ENCODE measurements at regions of chr7 and their contacts with region 1.

Region 1: DNA sequence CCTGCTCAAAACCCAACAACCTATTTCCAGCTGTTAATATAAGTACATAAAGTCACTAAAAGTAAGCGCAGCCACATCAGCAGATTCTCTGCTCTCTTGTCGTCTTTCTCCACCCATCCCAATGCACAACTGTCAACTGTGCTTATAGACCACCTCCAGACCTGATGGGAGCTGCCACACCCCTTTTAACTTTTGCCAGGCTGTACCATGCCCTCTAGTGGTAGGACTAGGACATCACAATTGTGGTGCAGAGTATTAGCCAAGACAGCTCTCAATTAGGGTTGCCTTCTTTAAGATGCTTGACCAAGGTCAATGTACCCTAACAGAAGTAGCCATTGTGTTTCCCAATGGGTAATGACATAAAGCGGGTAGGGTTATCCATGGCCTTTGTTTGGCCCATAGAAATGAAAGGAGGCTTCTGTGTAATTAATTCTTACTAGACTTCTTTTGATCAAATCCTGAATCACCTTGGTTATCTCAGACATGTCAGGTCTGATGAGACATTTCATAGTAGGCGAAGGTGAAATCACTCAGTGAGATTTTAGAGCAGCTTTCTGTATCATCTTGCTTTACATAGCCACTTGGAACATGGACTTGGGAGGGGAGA is 68.1 kb downstream of the SCRN1 start:
- DNase-seq: peak; percentile 23
- H3K4me3 Mint-ChIP-seq: no peak overlapping the region
- H3K27ac Mint-ChIP-seq: no peak overlapping the region
- H3K4me1 Mint-ChIP-seq: no peaks in the 10 kb centered on the region
- H3K27me3 Mint-ChIP-seq: no peaks in the 10 kb centered on the region

Region 2: DNA sequence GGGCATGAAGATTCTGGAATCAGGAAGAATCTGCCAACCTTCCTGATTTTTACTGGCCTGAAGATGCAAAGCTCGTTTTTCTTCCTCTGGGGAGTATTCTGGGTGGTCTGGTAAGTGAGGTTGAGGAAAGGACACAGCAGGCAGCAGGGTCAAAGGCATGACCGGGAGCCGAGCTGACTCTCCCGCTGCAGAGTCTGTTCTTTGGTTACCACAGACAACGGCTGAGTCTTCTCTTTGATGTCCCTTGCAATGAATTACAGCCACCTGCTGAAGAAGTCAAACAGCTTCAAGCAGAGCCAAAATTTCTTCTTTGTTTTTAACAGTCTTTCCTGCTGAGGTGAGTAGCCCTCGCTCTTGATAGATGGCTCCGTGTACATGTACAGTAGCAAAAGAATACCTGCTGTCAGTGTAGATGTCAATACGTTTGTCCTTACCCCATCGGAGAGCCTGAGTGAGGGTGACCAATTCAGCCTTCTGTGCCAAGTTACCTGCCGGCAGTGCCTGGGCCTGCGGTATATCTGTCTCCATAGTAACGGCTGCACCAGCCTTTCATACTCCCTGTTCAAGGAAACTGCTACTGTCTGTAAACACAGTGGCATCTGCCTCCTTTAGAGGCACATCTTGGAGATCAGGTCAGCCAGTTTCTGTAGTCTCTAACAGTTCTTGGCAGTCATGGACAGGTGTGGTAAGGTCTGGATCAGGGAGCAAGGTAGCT is 281.5 kb before region 1 on chr7:
- intact Hi-C with region 1: loop called (anchors 2 kb)
- DNase-seq: no peak
- H3K4me3 Mint-ChIP-seq: no peak overlapping the region
- H3K27ac Mint-ChIP-seq: no peak overlapping the region
- H3K4me1 Mint-ChIP-seq: no peaks in the 10 kb centered on the region
- H3K27me3 Mint-ChIP-seq: no peaks in the 10 kb centered on the region

Region 3: GRCh38 chr7:29748286-29749108 is 173.0 kb before region 1 on chr7:
- intact Hi-C with region 1: loop called (anchors 1 kb)
- DNase-seq: no peak
- H3K4me3 Mint-ChIP-seq: no peak overlapping the region
- H3K27ac Mint-ChIP-seq: no peak overlapping the region
- H3K4me1 Mint-ChIP-seq: no peaks in the 10 kb centered on the region
- H3K27me3 Mint-ChIP-seq: peaks cover 7% of the 10 kb centered on the region

Region 4: GRCh38 chr7:29806208-29806994 is 115.1 kb before region 1 on chr7 and contains the start of gene WIPF3:
- intact Hi-C with region 1: no loop called
- DNase-seq: no peak
- H3K4me3 Mint-ChIP-seq: no peak within 1 kb of the TSS
- H3K27ac Mint-ChIP-seq: no peak within 1 kb of the TSS
- H3K4me1 Mint-ChIP-seq: peaks cover 7% of the 10 kb centered on the region
- H3K27me3 Mint-ChIP-seq: peaks cover 66% of the 10 kb centered on the region
- total RNA-seq, gene WIPF3: not detected in 2 replicates

Region 5: DNA sequence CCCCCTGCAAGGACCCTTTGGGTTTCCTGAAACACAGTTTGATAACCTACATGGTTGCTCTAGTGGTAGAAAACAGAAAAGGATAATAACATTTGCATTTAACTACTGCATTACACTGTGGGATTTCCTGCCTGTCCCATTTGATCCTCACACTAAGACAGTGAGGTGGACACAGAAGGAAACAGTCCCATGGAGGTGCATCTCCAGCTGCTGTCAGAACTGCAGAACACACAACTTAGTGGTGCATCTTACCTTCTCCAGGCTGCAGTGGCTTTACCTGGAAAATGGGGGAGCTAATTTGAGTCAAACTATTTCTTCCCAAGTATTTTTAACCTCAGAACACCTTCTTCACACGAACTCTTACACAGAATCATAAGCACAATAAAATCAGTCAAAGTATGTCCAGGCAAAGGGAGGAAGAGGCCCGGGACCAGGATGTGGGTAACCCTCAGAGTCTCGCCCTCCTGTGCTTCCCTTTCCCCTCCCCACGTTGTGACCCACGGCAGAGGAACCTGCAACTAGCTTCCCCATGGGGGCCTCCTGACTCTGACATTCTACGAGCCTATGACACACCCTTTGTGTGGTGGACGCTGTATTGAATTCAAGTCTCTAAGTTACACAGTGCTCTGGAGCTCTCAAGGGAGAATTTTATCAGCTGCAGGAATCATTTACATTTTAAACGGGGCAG is 34.4 kb after region 1 on chr7:
- intact Hi-C with region 1: no loop called
- DNase-seq: no peak
- H3K4me3 Mint-ChIP-seq: no peak overlapping the region
- H3K27ac Mint-ChIP-seq: no peak overlapping the region
- H3K4me1 Mint-ChIP-seq: peaks cover 18% of the 10 kb centered on the region
- H3K27me3 Mint-ChIP-seq: peaks cover 2% of the 10 kb centered on the region